A549 (cell line): ENCODE measurements at regions of chr10 and their contacts with region 1.

Region 1: DNA sequence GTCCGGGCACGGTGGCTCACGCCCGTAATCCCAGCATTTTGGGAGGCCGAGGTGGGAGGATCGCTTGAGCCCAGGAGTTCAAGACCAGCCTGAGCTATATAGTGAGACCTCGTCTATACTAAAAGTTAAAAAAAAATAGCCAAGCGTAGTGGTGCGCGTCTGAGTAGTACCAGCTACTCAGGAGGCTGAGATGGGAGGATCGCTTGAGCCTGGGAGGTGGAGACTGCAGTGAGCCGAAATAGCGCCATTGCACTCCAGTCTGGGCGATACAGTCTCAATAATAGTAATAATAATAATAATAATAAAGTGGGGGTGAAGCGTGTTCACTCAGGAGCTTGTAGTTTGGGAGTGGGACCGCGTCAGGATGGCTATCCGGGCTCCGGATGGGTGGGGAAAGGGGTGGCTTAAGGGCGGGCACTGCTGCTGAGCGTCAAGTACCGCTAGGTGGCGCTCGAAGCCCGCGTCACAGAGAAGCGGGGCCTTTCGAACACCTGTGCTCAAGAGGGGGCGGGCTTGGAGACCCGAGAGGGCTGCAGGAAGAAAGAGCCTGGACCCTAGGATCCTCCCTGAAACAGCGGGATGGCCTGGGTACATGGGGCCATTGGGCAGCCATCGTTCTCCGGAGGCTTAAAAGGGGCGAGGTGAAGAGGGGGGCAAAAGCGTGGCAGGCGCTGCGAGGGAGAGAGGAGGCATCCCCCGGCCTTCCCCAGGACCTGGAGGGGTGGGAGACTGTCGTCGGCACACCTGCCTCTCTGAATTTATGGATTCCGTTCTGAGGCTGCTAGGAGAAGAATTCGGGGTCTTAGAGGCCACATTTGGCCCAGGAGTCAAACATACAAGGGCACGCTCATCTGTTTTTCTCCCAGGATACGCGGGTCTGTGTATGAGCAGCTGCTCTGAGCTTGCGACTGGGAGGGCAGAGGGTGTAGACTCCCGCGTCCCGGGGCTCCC is 14.5 kb downstream of the LBX1 start:
- DNase-seq: peak; percentile 66 to 74
- ATAC-seq: peak; percentile 69 to 86
- H3K4me3 ChIP-seq: peak overlapping the region; percentile 40
- H3K27ac ChIP-seq: no peak overlapping the region
- H3K4me1 ChIP-seq: no peaks in the 10 kb centered on the region
- CTCF ChIP-seq: peak; percentile 93
- EP300 ChIP-seq: no peak
- POLR2A ChIP-seq: no peak
- RAD21 ChIP-seq: peak; percentile 91 to 93

Region 2: DNA sequence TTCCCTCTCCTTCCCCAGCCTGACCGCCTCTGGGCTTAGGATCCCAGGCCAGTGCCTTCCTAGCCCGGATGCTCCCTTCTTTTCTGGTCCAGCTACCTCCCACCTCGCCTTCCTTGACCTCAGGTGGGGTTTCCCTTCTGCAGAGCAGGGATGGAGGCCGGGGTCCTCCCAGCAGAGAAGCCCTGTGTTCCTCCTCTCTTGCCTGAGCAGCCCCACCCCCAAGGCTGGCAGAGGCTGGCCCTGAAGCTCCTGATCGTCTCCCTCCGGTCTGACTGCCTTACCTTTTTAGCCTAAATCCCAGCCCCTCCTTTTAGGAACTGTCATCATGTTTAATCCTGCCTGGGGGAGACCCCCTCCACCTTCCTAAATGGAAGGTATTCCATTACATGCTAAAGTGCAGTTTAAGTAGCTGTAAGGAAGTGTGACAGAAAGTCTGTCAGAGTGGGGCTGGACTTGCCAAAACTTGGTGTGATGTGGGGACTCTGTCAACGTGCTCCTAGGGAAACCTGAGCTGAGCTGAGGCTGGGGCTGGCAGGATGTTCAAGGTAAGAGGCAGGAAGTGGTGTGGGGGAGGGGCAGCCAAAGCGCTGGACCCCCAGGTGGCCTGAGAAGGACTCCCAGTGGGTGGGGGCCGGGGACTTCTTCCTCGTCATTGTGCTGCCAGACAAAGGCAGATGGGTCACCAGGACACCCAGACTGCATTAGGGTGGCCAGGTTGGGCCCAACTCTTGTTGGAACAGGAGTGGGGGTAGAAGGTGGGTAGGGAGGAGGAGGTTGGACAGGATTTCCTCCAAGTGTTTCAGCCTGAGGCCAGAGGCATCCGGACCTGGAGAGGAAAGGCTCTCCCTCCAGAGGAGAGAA is 24.9 kb before region 1 on chr10:
- CTCF ChIA-PET with region 1: interaction called, 11 read pairs
- POLR2A ChIA-PET with region 1: no interaction called
- DNase-seq: no peak
- ATAC-seq: no peak
- H3K4me3 ChIP-seq: no peak overlapping the region
- H3K27ac ChIP-seq: no peak overlapping the region
- H3K4me1 ChIP-seq: no peaks in the 10 kb centered on the region
- CTCF ChIP-seq: no peak
- EP300 ChIP-seq: no peak
- POLR2A ChIP-seq: no peak
- RAD21 ChIP-seq: no peak

Region 3: DNA sequence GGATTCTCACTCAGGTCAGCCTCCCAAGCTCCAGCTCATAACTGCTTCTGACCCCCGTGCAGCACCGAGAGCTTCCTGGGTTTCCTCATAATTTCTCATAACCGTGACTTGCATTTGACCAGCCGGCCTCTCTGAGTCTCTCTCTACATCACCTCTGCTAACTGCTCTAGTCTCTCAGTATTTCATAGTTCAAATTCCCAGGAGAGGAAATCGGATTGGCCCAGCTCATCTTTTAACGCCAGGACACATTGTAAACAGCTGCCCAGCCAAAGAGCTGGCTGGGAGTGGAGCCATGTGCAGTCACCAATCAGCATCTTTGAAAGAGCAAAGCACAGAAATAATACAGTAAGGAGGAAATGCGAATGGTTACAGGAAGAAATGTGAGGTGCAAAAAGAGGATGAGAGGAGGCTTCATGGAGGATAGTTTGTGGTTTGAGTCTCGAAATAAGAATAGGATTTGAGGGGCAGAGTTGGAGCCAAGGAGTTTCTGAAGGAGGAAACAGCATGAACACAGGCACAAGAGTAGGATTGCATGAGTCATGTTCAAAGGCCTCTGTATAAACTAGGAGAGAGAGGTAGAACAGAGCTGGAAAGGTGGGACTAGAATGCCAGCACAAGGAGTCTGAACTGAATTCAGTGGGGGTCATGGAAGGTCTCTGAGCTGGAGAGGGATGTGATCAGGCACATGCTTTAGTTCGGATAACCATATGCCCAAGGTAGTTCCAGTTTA is 29.8 kb after region 1 on chr10:
- CTCF ChIA-PET with region 1: interaction called, 63 read pairs
- POLR2A ChIA-PET with region 1: no interaction called
- DNase-seq: peak; percentile 60 to 72
- ATAC-seq: peak; percentile 65 to 87; a peak in 5 of 6 replicates
- H3K4me3 ChIP-seq: no peak overlapping the region
- H3K27ac ChIP-seq: peak overlapping the region; percentile 37 to 70; a peak in 5 of 6 replicates
- H3K4me1 ChIP-seq: peaks cover 13% of the 10 kb centered on the region
- CTCF ChIP-seq: no peak
- EP300 ChIP-seq: no peak
- POLR2A ChIP-seq: no peak
- RAD21 ChIP-seq: no peak

Region 4: DNA sequence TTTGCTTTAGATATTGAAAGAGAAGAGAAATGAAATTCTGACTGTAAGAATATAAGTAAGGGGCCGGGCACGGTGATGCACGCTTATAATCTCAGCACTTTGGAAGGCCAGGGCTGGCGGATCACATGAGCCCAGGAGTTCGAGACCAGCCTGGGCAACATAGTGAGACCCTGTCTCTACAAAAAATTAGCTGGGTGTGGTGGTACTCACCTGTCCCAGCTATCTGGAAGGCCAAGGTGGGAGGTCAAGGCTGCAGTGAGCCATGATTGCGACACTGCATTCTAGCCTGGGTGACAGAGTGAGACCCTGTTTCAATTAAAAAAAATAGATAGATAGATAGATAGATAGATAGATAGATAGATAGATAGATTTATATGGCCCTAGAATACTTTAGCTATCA is 221.6 kb after region 1 on chr10:
- CTCF ChIA-PET with region 1: interaction called, 135 read pairs
- POLR2A ChIA-PET with region 1: no interaction called
- DNase-seq: no peak
- ATAC-seq: no peak
- H3K4me3 ChIP-seq: no peak overlapping the region
- H3K27ac ChIP-seq: no peak overlapping the region
- H3K4me1 ChIP-seq: peaks cover 5% of the 10 kb centered on the region; the same call in 1 of the 3 replicates
- CTCF ChIP-seq: no peak
- EP300 ChIP-seq: no peak
- POLR2A ChIP-seq: no peak
- RAD21 ChIP-seq: no peak

Region 5: DNA sequence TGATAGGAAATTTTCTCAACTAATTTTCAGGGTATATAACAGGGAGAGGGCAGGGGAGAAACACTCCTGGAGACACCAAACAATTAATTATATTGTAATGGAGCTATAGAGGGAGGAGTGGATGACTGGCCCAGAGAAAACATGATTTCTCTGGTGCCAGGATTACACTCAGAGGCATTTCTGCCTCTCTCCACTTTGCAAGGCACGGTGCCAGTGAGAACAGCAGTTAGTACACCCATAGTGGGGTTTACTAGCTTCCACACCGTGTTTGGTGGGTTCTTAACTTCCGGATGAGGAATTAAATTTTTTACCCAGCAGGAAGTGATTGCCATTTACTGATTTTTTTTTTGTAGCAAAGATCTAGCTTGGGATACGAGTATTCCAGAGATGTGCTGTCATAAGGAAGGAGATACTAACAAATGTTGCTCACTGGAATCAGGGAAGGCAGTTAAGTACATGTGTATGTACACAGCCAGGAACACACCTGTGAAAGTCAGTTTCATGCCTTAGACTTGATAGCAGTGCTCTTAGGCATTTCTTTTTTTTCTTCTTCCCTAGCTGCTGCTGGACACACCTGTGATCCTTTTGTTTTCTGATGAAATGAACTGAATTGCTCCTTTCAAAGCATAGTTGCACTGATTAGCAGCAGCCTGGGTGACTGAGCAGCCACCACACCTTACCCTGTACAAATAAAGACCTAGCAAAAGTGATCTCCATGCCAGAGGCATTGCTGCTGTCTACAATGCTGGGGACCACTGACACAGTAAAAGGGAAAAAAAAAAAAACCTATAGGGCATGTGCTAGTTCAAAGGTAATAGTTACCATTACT is 315.2 kb after region 1 on chr10:
- CTCF ChIA-PET with region 1: interaction called, 21 read pairs
- POLR2A ChIA-PET with region 1: no interaction called
- DNase-seq: no peak
- ATAC-seq: no peak
- H3K4me3 ChIP-seq: no peak overlapping the region
- H3K27ac ChIP-seq: no peak overlapping the region
- H3K4me1 ChIP-seq: no peaks in the 10 kb centered on the region
- CTCF ChIP-seq: no peak
- EP300 ChIP-seq: no peak
- POLR2A ChIP-seq: no peak
- RAD21 ChIP-seq: no peak

Region 6: GRCh38 chr10:101569838-101570766 is 355.4 kb after region 1 on chr10:
- CTCF ChIA-PET with region 1: interaction called, 136 read pairs
- POLR2A ChIA-PET with region 1: interaction called, 9 read pairs
- DNase-seq: peak; percentile 69 to 88
- ATAC-seq: peak; percentile 69 to 88
- H3K4me3 ChIP-seq: peak overlapping the region; percentile 63
- H3K27ac ChIP-seq: peak overlapping the region; percentile 81 to 92
- H3K4me1 ChIP-seq: peaks cover 10% of the 10 kb centered on the region; the same call in 2 of the 3 replicates
- CTCF ChIP-seq: peak; percentile 93
- EP300 ChIP-seq: no peak
- POLR2A ChIP-seq: peak; percentile 26; the same call in 1 of the 2 replicates
- RAD21 ChIP-seq: peak; percentile 75 to 96